ENCODE measurements at regions of chr3 and their contacts with region 1.

Region 1: GRCh38 chr3:170098753-170099152 is 61.0 kb downstream of the GPR160 start:
- DNase-seq: no peak
- ATAC-seq: no peak
- H3K4me3 Mint-ChIP-seq: no peak overlapping the region
- H3K27ac Mint-ChIP-seq: peak overlapping the region; percentile 43
- H3K4me1 Mint-ChIP-seq: peaks cover 9% of the 10 kb centered on the region
- H3K27me3 Mint-ChIP-seq: no peaks in the 10 kb centered on the region
- CTCF ChIP-seq: no peak

Region 2: DNA sequence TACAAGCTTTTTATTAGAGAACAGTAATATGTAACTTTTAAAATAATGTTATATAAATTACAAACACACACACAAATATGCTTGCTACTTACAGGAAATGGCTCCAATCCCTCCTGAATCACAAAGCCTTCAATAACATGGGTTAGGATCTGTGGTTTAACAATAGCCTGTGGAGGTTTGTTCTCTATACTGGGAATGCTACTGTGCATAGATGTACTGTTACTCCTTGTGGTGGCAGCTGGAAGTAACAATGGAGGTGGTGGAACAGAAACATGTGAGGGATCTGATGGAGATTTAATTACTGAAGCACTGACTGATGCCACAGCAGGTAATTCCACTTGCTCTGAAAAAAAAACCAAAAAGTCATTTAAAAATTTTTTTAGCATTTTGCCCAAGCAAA is 18.4 kb after region 1 on chr3:
- CTCF ChIA-PET with region 1: interaction called, 3 read pairs
- POLR2A ChIA-PET with region 1: no interaction called
- intact Hi-C with region 1: loop called (anchors 2 kb)
- DNase-seq: no peak
- ATAC-seq: no peak
- H3K4me3 Mint-ChIP-seq: no peak overlapping the region
- H3K27ac Mint-ChIP-seq: no peak overlapping the region
- H3K4me1 Mint-ChIP-seq: no peaks in the 10 kb centered on the region
- H3K27me3 Mint-ChIP-seq: no peaks in the 10 kb centered on the region
- CTCF ChIP-seq: no peak

Measured in activated B cell treated with CpG ODN at 0.5 μM for 24 hours (primary cell).